Mucosa of descending colon (tissue), 3 donors: ENCODE measurements at regions of chr18 and their contacts with region 1.

Region 1: GRCh38 chr18:54647176-54647575 is 56.1 kb downstream of the DYNAP start:
- DNase-seq: peak in 1 of 3 donors; percentile 59
- ATAC-seq: peak; percentile 39
- H3K4me3 ChIP-seq: no peak overlapping the region
- H3K4me1 ChIP-seq: no peaks in the 10 kb centered on the region
- CTCF ChIP-seq: no peak

Region 2: DNA sequence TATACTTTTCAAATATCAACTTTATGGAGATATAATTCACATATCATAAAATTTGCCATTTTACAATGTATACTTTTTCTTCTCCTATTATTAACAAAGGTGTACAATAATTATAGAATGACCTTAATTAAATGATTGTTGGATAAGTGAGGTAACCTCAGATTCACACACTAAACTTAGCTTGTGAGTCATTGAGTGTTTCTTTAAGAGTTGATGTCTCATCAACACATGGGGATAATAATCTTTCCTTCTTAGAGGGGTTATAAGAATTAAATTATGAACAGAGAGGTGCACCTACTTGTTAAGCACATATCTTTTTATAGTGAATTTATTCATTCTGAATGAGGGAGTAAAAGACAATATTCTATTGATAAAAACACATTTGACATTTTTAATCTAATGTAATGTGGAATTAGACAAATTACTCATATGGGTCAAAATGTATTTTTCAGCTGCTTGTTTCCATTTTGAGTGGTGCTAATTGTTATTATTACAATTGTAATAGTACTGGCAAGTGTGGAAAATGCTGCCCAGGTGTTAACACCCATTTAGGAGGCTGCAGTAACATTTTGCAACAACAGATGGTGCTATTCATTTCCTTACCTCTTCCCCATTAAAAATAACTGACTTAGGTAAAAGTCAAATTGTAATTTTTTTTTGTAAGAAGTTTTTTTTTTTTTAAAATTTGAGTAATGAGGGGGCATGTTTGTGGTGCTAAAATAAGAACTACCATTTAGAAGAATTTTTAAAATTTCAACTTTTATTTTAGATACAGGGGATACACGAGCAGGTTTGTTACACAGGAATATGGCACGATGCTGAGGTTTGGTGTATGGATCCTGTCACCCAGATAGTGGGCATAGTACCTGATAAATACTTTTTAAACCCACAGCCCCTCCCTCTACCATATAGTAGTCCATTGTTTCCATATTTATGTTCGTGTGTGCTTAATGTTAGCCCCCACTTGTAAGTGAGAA is 88.3 kb before region 1 on chr18:
- intact Hi-C with region 1: loop called in 1 of 2 experiments (anchors 5 kb)
- DNase-seq: peak in 1 of 3 donors; percentile 70
- ATAC-seq: peak; percentile 43
- H3K4me3 ChIP-seq: no peak overlapping the region
- H3K4me1 ChIP-seq: no peaks in the 10 kb centered on the region
- CTCF ChIP-seq: peak; percentile 28